ENCODE measurements at regions of chr6 and their contacts with region 1.

Region 1: GRCh38 chr6:37222125-37222967 is 35.2 kb upstream of the TBC1D22B start:
- DNase-seq: peak; percentile 92
- H3K4me3 Mint-ChIP-seq: peak overlapping the region; percentile 64
- H3K27ac Mint-ChIP-seq: no peak overlapping the region
- H3K4me1 Mint-ChIP-seq: peaks cover 7% of the 10 kb centered on the region
- H3K27me3 Mint-ChIP-seq: no peaks in the 10 kb centered on the region
- CTCF ChIP-seq: no peak

Region 2: DNA sequence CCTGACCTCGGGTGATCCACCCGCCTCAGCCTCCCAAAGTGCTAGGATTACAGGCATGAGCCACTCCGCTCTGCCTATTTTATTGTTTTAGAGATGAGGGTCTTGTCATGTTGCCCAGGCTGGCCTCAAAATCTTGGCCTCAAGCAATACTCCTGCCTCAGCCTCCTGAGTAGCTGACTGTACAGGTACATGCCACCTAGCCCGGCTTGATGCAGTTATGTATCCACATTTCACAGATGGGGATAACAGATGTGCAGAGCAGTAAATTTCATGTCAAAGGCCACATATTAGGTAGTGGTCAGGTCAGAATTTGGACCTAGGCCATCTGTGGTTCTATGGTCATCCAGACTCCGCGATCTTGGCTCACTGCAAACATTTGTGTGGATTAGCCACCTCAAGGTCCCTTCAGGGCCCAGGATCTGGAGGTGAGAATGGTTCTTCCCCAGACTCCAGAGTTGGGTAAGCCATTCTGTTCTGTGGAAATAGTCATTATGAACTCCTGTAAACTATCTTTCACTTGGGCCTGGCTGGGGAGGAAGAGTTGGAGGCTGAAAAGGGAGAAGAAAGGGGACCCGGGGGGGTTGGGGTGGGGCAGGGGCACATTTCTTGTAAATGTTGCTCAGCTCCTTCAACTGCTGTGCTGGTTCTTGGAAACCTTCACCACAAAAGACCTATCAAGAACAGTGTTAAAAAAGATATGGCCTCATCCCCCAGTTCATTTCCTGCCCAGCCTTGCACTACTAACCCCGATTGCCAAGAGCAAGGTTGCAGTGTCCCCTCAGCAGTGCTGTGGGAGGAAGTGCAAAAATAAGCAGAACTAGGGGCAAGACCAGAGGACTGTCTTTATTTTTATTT is 39.4 kb before region 1 on chr6:
- CTCF ChIA-PET with region 1: interaction called, 3 read pairs
- POLR2A ChIA-PET with region 1: no interaction called
- intact Hi-C with region 1: loop called (anchors 1 kb)
- DNase-seq: no peak
- H3K4me3 Mint-ChIP-seq: no peak overlapping the region
- H3K27ac Mint-ChIP-seq: no peak overlapping the region
- H3K4me1 Mint-ChIP-seq: no peaks in the 10 kb centered on the region
- H3K27me3 Mint-ChIP-seq: no peaks in the 10 kb centered on the region
- CTCF ChIP-seq: no peak

Region 3: DNA sequence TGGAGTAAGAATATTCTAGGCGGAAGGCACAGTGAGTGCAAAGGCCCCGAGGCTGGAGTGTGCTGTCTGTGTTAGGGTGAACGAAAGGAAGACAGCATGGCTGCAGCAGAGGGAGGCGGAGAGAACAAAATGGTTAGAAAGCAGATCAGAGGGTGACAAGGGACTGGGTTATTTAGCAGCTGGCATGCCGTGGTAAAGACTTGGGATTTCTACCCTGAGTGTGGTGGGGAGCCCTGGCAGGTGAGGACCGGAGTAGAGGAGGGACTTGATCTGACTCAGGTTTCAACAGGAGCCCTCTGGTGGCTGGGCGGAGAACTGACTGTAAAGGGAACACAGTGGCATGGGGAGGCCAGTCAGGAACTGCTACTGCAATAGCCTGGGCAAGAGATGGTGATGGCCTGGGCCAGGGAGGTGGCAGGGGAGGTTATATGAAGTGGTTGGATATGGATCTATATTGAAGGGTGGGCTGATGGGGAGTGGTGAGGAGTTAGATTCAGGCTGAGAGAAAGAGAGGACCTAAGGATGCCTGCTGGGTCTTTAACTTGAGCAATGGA is 14.4 kb before region 1 on chr6:
- CTCF ChIA-PET with region 1: interaction called, 36 read pairs
- POLR2A ChIA-PET with region 1: interaction called, 3 read pairs
- intact Hi-C with region 1: no loop called
- DNase-seq: peak; percentile 87
- H3K4me3 Mint-ChIP-seq: no peak overlapping the region
- H3K27ac Mint-ChIP-seq: no peak overlapping the region
- H3K4me1 Mint-ChIP-seq: peaks cover 7% of the 10 kb centered on the region
- H3K27me3 Mint-ChIP-seq: no peaks in the 10 kb centered on the region
- CTCF ChIP-seq: peak; percentile 60

Region 4: GRCh38 chr6:37239950-37240713 is 17.8 kb after region 1 on chr6:
- CTCF ChIA-PET with region 1: interaction called, 4 read pairs
- POLR2A ChIA-PET with region 1: interaction called, 24 read pairs
- intact Hi-C with region 1: no loop called
- DNase-seq: peak; percentile 95
- H3K4me3 Mint-ChIP-seq: no peak overlapping the region
- H3K27ac Mint-ChIP-seq: peak overlapping the region; percentile 89
- H3K4me1 Mint-ChIP-seq: peaks cover 47% of the 10 kb centered on the region
- H3K27me3 Mint-ChIP-seq: no peaks in the 10 kb centered on the region
- CTCF ChIP-seq: no peak